ENCODE measurements at regions of chr3 and their contacts with region 1.

Region 1: DNA sequence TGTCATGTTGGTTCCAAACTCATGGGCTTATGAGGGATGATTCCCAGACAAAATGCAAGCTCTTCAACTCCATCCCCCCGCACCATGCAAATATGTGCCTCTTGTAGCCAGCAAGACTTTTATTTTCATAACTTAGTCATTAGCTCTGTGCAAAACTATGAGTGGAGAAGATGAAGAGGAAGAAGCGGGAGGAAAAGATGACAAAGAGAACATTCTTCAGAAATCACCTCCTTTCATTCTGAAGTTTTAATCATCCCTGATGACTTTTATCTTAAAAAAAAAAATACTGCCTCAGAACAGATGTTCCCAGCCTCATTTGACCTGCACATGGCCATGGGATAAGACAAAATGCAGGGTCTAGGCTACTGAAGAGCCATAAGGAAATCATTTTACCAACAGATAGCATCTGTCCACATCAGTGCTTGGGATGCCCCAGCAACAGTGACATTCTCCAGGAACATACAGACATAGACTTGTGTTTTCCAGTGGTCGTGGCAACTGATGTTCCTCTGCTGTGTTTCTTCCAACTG is 145.5 kb downstream of the WNT5A start:
- DNase-seq: peak; percentile 60
- H3K4me3 ChIP-seq: no peak overlapping the region
- H3K27me3 ChIP-seq: no peaks in the 10 kb centered on the region
- CTCF ChIP-seq: no peak

Region 2: GRCh38 chr3:55330355-55330754 is 11.2 kb before region 1 on chr3:
- CTCF ChIA-PET with region 1: interaction called, 5 read pairs
- POLR2A ChIA-PET with region 1: interaction called, 16 read pairs
- DNase-seq: peak; percentile 94
- H3K4me3 ChIP-seq: no peak overlapping the region
- H3K27me3 ChIP-seq: no peaks in the 10 kb centered on the region
- CTCF ChIP-seq: no peak

Region 3: DNA sequence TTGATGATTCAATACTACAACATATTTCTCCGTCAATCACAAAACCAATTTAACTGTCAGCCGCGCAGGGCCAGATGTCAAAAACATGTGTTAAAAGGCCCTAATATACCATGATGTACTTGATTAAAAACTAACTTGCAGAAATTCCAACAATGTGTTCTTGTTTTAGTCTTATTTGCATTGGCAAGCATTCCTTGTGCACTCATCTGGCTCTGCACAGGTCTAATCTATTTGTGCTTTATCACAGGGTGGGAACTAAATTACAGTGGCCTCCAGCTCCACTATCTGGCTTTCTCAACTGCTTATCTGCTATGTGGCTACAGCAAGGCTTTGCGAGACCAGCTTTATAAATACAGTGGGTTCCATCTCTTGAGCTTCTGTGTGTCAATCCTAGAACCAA is 671.2 kb after region 1 on chr3:
- CTCF ChIA-PET with region 1: no interaction called
- POLR2A ChIA-PET with region 1: no interaction called
- DNase-seq: no peak
- H3K4me3 ChIP-seq: no peak overlapping the region
- H3K27me3 ChIP-seq: no peaks in the 10 kb centered on the region
- CTCF ChIP-seq: no peak